Activated B cell treated with CpG ODN at 0.5 μM for 24 hours (primary cell): ENCODE measurements at regions of chr5 and their contacts with region 1.

Region 1: DNA sequence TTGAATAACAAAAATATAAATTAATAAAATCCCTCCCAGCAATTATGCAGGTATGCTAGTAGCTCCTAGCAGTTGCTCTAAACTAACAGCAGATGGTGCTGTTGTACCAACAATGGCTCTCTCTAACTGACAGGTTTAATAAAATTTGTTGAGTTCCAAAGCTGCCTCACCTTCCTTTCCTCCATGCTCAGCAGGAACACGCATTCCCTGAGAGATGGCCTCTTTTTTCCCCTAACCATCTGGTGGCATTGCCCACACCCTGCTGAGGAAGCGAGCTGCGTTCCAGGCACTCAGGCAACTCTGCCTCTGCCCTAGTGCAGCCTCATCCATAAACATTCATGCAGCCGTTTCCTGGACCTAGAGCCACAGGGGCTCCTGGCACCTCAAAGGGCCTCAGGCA is 106.2 kb downstream of the KLHL3 start:
- DNase-seq: no peak
- ATAC-seq: peak; percentile 65
- H3K4me3 Mint-ChIP-seq: no peak overlapping the region
- H3K27ac Mint-ChIP-seq: no peak overlapping the region
- H3K4me1 Mint-ChIP-seq: no peaks in the 10 kb centered on the region
- H3K27me3 Mint-ChIP-seq: no peaks in the 10 kb centered on the region
- CTCF ChIP-seq: peak; percentile 63

Region 2: DNA sequence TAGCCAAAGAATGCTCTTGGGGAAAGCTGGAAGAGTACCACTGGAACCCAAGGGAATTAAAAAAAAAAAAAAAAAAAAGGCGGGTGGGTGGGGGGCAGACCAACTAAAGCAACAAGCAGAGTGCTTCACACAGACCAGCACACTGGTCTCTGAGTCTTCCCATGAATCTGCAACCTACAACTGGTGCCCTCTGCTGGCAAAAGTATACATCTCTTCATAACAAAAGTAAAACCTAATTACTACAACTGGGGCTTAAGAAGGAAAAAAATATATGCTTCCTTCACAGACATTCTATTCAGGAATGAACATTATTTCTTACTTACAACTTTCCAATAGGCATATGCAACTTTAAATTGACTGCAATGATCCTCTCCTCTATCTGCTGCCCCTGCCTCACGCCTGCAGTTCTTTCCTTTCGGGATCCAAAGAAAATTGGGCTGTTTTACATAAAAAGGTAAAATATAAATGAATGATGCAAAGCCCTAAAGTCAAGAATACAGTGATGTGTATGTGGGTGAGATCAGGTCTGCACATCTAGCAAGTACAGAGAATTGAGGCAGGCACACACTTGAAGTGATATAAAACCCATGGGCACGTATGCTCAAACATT is 113.5 kb after region 1 on chr5:
- CTCF ChIA-PET with region 1: interaction called, 73 read pairs
- POLR2A ChIA-PET with region 1: no interaction called
- intact Hi-C with region 1: loop called (anchors 1 kb)
- DNase-seq: no peak
- ATAC-seq: peak; percentile 88
- H3K4me3 Mint-ChIP-seq: no peak overlapping the region
- H3K27ac Mint-ChIP-seq: no peak overlapping the region
- H3K4me1 Mint-ChIP-seq: peaks cover 4% of the 10 kb centered on the region
- H3K27me3 Mint-ChIP-seq: no peaks in the 10 kb centered on the region
- CTCF ChIP-seq: no peak

Region 3: DNA sequence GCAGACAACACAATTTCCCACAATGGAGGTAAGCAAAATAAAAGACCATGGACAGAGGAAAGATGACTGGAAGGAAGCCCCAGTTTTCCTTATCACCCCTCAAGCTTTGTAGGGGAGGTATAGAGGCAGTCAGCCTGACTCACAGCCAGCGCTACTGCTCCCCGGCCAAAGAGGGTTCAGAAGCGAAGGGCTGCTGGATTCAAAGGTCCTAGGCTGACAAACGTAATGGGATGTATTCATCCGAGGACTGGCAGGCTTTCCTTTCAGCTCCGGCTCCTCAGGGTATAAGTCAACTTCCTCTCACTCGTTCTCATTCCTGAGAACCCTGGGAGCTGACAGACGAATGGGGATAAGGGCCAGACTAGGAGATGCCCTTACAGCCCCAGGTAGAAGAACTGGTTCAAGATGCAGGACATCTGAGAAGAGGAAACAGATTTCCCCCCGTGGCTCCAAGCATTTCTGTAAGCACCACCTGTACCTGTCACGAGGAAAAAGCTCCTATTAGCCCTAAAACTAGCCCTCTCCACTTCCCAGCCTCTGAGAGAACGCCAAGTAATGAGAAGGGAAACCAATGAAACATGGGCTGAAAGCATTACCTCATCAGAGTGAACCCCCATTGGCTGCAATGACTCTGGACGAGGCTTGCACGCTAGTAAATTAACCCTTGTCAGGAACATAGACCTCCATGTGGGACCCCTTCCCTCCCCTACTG is 425.4 kb after region 1 on chr5:
- CTCF ChIA-PET with region 1: no interaction called
- POLR2A ChIA-PET with region 1: no interaction called
- intact Hi-C with region 1: no loop called
- DNase-seq: no peak
- ATAC-seq: no peak
- H3K4me3 Mint-ChIP-seq: no peak overlapping the region
- H3K27ac Mint-ChIP-seq: no peak overlapping the region
- H3K4me1 Mint-ChIP-seq: peaks cover 2% of the 10 kb centered on the region
- H3K27me3 Mint-ChIP-seq: no peaks in the 10 kb centered on the region
- CTCF ChIP-seq: no peak

Region 4: GRCh38 chr5:138065102-138065501 is 435.5 kb after region 1 on chr5:
- CTCF ChIA-PET with region 1: interaction called, 25 read pairs
- POLR2A ChIA-PET with region 1: no interaction called
- intact Hi-C with region 1: loop called (anchors 1 kb)
- DNase-seq: no peak
- ATAC-seq: no peak
- H3K4me3 Mint-ChIP-seq: no peak overlapping the region
- H3K27ac Mint-ChIP-seq: no peak overlapping the region
- H3K4me1 Mint-ChIP-seq: peaks cover 5% of the 10 kb centered on the region
- H3K27me3 Mint-ChIP-seq: no peaks in the 10 kb centered on the region
- CTCF ChIP-seq: no peak

Region 5: DNA sequence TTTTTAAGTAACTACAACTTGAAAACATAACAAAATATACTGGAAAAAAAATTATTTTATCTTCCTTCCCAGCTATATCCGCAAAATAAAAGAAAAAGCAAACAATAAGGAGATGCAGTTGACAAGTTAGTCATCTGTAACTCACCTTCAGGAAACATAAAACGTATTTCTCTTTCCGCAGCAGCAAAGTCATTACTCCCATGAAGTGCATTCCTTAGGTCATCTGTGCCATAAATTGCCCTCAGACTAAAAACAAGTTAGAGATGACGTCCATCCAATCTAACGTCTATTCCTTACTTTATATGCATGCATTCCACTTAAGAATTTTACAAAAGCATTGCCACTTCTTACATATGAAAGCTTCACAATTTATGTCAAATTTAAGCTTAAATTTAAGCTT is 498.7 kb after region 1 on chr5:
- CTCF ChIA-PET with region 1: interaction called, 3 read pairs
- POLR2A ChIA-PET with region 1: no interaction called
- intact Hi-C with region 1: loop called (anchors 1 kb)
- DNase-seq: no peak
- ATAC-seq: no peak
- H3K4me3 Mint-ChIP-seq: no peak overlapping the region
- H3K27ac Mint-ChIP-seq: no peak overlapping the region
- H3K4me1 Mint-ChIP-seq: peaks cover 3% of the 10 kb centered on the region
- H3K27me3 Mint-ChIP-seq: peaks cover 3% of the 10 kb centered on the region
- CTCF ChIP-seq: no peak